Dendritic cell treated with granulocyte-macrophage colony-stimulating factor and Interleukin-4, amounts not matched to agents 40 ng/mL and 50 ng/mL, for 4 days (primary cell): ENCODE measurements at regions of chr14 and their contacts with region 1.

Region 1: DNA sequence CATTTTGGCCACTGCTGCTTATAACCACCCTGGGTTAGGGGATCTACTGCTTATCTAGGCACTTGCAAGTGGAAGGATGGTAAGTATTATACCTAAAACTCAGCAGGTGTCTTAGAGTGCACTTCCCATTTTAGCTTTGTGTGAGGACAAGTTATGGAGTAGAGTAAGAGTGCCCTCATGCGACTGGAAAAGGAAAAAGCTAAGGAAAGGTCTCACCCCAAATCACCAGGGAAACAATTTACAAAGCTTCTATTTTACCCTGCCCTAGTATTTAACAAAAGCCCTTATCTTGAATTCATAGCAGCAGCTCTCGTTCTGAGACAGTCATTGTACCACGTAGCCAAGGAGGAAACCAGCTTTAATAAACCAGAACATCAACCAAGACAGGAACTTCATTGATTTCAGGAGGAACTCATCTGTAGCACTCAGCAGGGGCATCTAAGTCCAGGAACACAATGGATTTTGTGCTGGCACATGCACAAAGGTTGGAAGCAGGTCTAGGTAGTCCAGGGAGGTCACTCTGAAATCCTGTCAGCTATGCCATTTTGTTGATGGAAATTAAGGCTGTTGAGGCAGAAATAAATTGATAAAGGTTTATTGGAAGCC is 2.9 kb downstream of the RDH12 start:
- H3K4me3 Mint-ChIP-seq: no peak overlapping the region
- H3K27ac Mint-ChIP-seq: peak overlapping the region; percentile 76
- H3K4me1 Mint-ChIP-seq: peaks cover 36% of the 10 kb centered on the region
- H3K27me3 Mint-ChIP-seq: no peaks in the 10 kb centered on the region

Region 2: DNA sequence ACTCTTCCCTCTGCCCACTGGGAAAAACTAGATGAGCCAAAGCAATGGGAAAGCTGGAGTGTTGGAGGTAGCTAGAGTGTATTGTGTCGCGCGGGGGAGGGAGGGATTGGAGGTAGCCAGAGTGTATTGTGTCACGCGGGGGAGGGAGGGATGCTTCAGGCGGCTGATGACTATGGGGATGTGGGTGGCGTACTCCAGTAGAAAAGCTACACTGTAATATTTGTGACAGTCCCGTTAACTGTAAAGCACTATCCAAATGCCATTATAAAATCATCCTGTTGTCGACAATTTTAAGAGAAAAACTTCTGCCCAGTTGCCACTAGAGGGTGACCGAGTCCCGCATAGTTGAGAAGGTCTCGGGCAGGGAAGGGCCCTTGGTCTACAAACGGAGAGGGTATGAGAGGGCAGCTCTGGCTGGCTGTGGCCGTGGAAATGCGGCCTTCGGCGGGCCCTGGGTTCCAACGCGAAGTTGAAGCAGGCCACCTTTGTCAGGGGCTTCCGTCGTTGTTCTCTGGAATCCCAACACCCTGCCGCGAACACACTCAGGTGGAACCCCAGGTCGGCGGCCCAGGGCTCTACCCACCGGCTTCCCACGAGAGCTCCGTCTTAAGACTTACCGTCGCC is 277.5 kb before region 1 on chr14:
- intact Hi-C with region 1: loop called (anchors 2 kb)
- H3K4me3 Mint-ChIP-seq: no peak overlapping the region
- H3K27ac Mint-ChIP-seq: no peak overlapping the region
- H3K4me1 Mint-ChIP-seq: peaks cover 18% of the 10 kb centered on the region
- H3K27me3 Mint-ChIP-seq: peaks cover 43% of the 10 kb centered on the region

Region 3: DNA sequence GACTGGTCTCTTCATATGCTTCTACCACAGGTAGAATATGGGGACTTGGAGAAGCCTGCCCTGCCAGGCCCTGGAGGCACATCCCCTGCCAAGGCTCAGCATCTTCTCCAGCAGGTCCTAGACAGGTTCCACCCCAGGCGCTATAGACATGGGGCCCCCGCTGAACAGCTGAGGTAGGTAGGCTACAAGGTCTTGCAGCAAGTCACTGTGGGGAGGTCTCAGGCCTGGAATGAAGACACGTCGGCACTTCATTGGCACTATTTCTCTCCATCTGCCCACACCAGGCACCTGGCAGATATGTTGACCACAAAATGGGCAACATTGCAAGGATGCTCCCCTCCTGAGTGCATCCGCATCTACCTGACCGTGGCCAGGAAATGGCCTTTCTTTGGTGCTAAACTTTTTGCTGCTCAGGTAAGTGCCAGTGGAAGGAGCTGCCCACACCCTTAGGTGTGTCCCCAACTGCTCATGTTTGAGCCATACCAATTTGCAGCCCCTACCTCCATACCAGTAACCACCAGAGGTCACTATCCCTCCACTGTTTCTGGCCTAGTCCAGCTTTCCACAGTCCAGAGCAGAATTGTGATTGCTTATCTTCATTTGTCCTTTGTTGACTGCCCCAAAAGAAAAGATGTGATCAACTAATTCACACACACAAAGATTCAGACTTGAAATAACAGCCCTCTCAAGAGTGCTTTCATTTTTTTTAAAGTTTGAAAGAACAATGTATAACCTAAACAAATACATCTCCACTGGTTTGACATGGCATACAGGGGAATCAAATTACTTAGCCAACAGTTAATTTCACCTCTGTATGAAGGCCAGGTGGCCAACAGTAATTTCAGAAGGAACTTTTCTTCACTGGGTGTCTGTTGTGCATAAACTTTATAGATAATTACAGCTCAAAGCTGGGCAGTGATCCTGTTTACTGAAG is 120.6 kb before region 1 on chr14:
- intact Hi-C with region 1: loop called (anchors 1 kb)
- H3K4me3 Mint-ChIP-seq: no peak overlapping the region
- H3K27ac Mint-ChIP-seq: no peak overlapping the region
- H3K4me1 Mint-ChIP-seq: peaks cover 36% of the 10 kb centered on the region
- H3K27me3 Mint-ChIP-seq: peaks cover 4% of the 10 kb centered on the region

Region 4: GRCh38 chr14:67619446-67620216 is 85.0 kb before region 1 on chr14 and contains the start of gene ARG2:
- intact Hi-C with region 1: loop called (anchors 1 kb)
- H3K4me3 Mint-ChIP-seq: peak within 1 kb of the TSS; percentile 80
- H3K27ac Mint-ChIP-seq: peak within 1 kb of the TSS; percentile 80
- H3K4me1 Mint-ChIP-seq: peaks cover 30% of the 10 kb centered on the region
- H3K27me3 Mint-ChIP-seq: peaks cover 23% of the 10 kb centered on the region

Region 5: DNA sequence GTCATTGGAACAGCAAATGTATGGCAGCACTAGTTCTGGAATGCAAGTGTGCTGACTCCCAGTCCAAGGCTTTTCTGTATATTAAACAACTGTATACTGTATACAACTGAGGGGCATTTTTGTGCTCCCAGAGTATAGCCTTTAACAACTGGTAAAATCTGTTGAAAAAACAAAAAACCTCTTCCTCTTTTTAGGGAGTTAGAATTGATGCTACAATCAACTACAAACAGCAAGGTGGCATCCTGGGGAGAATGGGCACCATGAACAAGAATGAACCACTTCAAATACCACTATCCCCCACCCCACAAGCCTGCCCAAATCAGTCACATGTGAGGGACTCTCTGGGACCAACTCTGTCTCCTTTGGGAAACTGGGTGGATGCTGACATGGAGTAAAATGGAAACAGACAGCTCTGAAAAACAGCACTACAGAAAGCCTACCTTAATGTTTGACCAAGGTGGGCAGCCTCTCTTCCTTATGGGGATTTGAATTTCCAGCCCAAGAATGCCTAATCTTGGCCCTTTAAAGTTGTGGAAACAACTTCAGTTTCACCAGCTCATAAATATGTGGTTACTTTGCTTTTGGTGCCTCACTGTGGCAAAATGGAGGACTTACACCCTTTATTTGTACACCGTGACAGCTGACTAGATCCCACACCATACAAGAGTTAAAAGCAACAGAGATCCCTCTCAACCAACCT is 37.7 kb before region 1 on chr14:
- intact Hi-C with region 1: loop called (anchors 2 kb)
- H3K4me3 Mint-ChIP-seq: no peak overlapping the region
- H3K27ac Mint-ChIP-seq: peak overlapping the region; percentile 30
- H3K4me1 Mint-ChIP-seq: peaks cover 77% of the 10 kb centered on the region
- H3K27me3 Mint-ChIP-seq: no peaks in the 10 kb centered on the region

Region 6: GRCh38 chr14:68137704-68138619 is 433.4 kb after region 1 on chr14:
- intact Hi-C with region 1: no loop called
- H3K4me3 Mint-ChIP-seq: no peak overlapping the region
- H3K27ac Mint-ChIP-seq: no peak overlapping the region
- H3K4me1 Mint-ChIP-seq: no peaks in the 10 kb centered on the region
- H3K27me3 Mint-ChIP-seq: no peaks in the 10 kb centered on the region